ENCODE measurements at regions of chr9 and their contacts with region 1.

Region 1: DNA sequence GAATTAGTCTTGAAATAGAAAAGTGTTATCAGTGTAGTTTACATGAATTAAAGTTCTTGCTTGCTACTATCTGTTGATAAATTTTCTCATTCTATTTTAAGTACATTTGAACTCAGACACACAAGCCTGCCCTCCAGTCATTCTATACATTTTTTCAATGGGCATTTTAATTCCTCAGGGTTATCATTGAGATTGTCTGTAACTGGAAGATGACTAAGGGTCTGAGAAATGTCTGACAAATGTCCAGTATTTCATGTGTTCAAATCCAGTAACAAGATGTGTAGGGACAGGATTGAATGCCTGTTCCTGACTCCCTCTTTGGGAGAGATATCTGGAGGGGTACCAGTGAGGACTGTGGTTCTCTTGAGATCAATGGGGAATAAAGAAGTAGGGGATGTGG is 223.9 kb upstream of the ADAMTSL1 start:
- DNase-seq: no peak
- H3K4me3 ChIP-seq: no peak overlapping the region
- H3K27ac ChIP-seq: no peak overlapping the region
- H3K4me1 ChIP-seq: no peaks in the 10 kb centered on the region
- H3K27me3 ChIP-seq: no peaks in the 10 kb centered on the region
- CTCF ChIP-seq: no peak
- POLR2A ChIP-seq: no peak

Region 2: GRCh38 chr9:19018201-19018600 is 768.1 kb after region 1 on chr9:
- intact Hi-C with region 1: loop called (anchors 5 kb)
- DNase-seq: no peak
- H3K4me3 ChIP-seq: no peak overlapping the region
- H3K27ac ChIP-seq: no peak overlapping the region
- H3K4me1 ChIP-seq: peaks cover 5% of the 10 kb centered on the region
- H3K27me3 ChIP-seq: no peaks in the 10 kb centered on the region
- CTCF ChIP-seq: no peak
- POLR2A ChIP-seq: no peak